CD4-positive, alpha-beta T cell (primary cell): ENCODE measurements at regions of chr5 and their contacts with region 1.

Region 1: GRCh38 chr5:126656396-126657007 is 55.8 kb downstream of the PHAX start:
- DNase-seq: peak in 4 of 14 experiments; percentile 40 to 67 (median 56)
- ATAC-seq: no peak
- H3K4me3 ChIP-seq: no peak overlapping the region
- H3K4me3 Mint-ChIP-seq: no peak overlapping the region
- H3K27ac ChIP-seq: no peak overlapping the region
- H3K27ac Mint-ChIP-seq: no peak overlapping the region
- H3K4me1 ChIP-seq: no peaks in the 10 kb centered on the region
- H3K4me1 Mint-ChIP-seq: no peaks in the 10 kb centered on the region
- H3K27me3 ChIP-seq: no peaks in the 10 kb centered on the region
- H3K27me3 Mint-ChIP-seq: no peaks in the 10 kb centered on the region
- CTCF ChIP-seq: peak; percentile 83

Region 2: GRCh38 chr5:126624534-126624933 is 32.0 kb before region 1 on chr5:
- CTCF ChIA-PET with region 1: no interaction called
- POLR2A ChIA-PET with region 1: no interaction called
- intact Hi-C with region 1: no loop called
- DNase-seq: peak in 1 of 14 experiments; percentile 15
- ATAC-seq: no peak
- H3K4me3 ChIP-seq: no peak overlapping the region
- H3K4me3 Mint-ChIP-seq: no peak overlapping the region
- H3K27ac ChIP-seq: no peak overlapping the region
- H3K27ac Mint-ChIP-seq: no peak overlapping the region
- H3K4me1 ChIP-seq: no peaks in the 10 kb centered on the region
- H3K4me1 Mint-ChIP-seq: no peaks in the 10 kb centered on the region
- H3K27me3 ChIP-seq: no peaks in the 10 kb centered on the region
- H3K27me3 Mint-ChIP-seq: no peaks in the 10 kb centered on the region
- CTCF ChIP-seq: no peak

Region 3: DNA sequence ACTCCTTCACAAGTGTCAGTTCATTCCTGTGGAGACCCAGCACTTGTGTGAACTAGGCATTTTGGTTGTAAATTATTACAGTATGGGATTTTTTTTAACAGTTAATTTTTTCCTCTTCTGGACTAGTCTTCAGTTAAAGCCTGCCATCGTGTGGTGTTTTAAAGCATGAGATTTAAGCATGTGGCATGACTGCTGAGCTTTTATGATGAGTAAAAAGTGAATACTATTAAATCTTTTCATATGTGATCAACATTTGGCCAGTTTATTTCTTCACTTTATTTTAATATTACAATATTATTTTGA is 145.4 kb after region 1 on chr5:
- CTCF ChIA-PET with region 1: no interaction called
- POLR2A ChIA-PET with region 1: no interaction called
- intact Hi-C with region 1: loop called in 1 of 2 experiments (anchors 1 kb)
- DNase-seq: peak in 4 of 14 experiments; percentile 12 to 59 (median 52)
- ATAC-seq: peak; percentile 48
- H3K4me3 ChIP-seq: no peak overlapping the region
- H3K4me3 Mint-ChIP-seq: no peak overlapping the region
- H3K27ac ChIP-seq: no peak overlapping the region
- H3K27ac Mint-ChIP-seq: no peak overlapping the region
- H3K4me1 ChIP-seq: peaks cover 9% of the 10 kb centered on the region
- H3K4me1 Mint-ChIP-seq: peaks cover 40% of the 10 kb centered on the region
- H3K27me3 ChIP-seq: no peaks in the 10 kb centered on the region
- H3K27me3 Mint-ChIP-seq: no peaks in the 10 kb centered on the region
- CTCF ChIP-seq: no peak

Region 4: GRCh38 chr5:127492854-127493738 is 836.6 kb after region 1 on chr5:
- CTCF ChIA-PET with region 1: no interaction called
- POLR2A ChIA-PET with region 1: no interaction called
- intact Hi-C with region 1: loop called in 1 of 2 experiments (anchors 2 kb)
- DNase-seq: peak in 3 of 14 experiments; percentile 35 to 52 (median 52)
- ATAC-seq: peak; percentile 71
- H3K4me3 ChIP-seq: no peak overlapping the region
- H3K4me3 Mint-ChIP-seq: no peak overlapping the region
- H3K27ac ChIP-seq: no peak overlapping the region
- H3K27ac Mint-ChIP-seq: no peak overlapping the region
- H3K4me1 ChIP-seq: no peaks in the 10 kb centered on the region
- H3K4me1 Mint-ChIP-seq: no peaks in the 10 kb centered on the region
- H3K27me3 ChIP-seq: peaks cover 6 to 10% of the 10 kb centered on the region in 2 experiments
- H3K27me3 Mint-ChIP-seq: peaks cover 31% of the 10 kb centered on the region
- CTCF ChIP-seq: peak; percentile 99